ENCODE measurements at regions of chr11 and their contacts with region 1.

Region 1: DNA sequence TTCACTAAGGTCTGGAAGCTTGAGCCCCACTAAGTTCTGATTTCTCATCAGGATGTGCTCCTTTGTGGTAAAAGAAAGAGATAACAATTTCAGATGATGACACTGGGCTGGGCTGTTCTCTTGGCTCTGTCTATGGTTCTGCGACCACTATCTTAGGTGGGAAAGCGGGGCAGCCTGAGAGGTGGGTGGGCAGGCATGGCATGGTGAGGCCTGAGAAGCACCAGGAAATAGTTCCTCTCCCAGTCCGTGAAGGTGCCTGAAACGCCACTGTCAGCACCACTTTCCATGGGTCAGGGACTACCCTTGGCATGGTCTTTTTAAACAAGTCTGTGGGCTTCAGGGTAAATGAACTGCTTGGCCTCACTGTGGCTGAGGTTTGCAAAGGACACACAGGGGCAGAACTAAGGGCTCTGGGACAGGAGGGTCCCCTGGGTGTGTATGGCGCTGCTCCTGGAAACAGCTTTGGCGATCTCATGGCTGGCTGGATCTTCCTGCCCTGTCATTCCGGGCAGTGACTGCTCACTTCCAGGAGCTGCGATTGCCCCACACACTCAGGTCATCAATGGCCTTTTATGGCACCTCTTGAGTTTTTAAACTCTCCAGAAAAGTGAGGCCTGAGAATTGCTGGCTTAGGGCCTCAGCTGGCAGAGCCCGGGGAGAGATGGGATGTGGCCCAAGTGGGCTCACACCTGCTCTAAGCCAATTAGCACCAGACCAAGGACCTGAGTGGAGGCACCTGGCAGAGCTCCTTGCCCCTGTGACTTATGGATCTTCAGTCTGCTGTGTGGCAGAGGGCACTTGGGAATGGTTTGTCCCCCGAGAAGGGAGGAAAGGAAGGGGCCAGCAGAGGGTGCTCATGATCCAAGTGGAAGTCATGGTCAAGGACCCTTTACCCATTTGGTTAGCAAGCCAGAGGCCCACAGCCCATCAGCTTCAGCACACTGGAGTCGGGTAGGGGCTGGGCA is 55.6 kb upstream of the LYVE1 start:
- DNase-seq: peak in 1 of 3 donors; percentile 46
- H3K4me3 ChIP-seq: peak overlapping the region in 1 of 3 experiments; percentile 39
- H3K4me3 Mint-ChIP-seq: peak overlapping the region in 1 of 2 donors; percentile 78
- H3K27ac ChIP-seq: peak overlapping the region; percentile 73 to 92
- H3K27ac Mint-ChIP-seq: peak overlapping the region; percentile 95 to 100 (median 97)
- H3K4me1 ChIP-seq: peaks cover 45 to 46% of the 10 kb centered on the region in 2 donors
- H3K4me1 Mint-ChIP-seq: peaks cover 34% of the 10 kb centered on the region
- H3K27me3 ChIP-seq: no peaks in the 10 kb centered on the region
- H3K27me3 Mint-ChIP-seq: peaks cover 0 to 1% (median 0%) of the 10 kb centered on the region in 3 donors
- CTCF ChIP-seq: peak; percentile 15

Region 2: GRCh38 chr11:10550503-10551289 is 73.4 kb before region 1 on chr11:
- intact Hi-C with region 1: no loop called
- DNase-seq: no peak
- H3K4me3 ChIP-seq: no peak overlapping the region
- H3K4me3 Mint-ChIP-seq: no peak overlapping the region
- H3K27ac ChIP-seq: no peak overlapping the region
- H3K27ac Mint-ChIP-seq: no peak overlapping the region
- H3K4me1 ChIP-seq: no peaks in the 10 kb centered on the region
- H3K4me1 Mint-ChIP-seq: peaks cover 3% of the 10 kb centered on the region
- H3K27me3 ChIP-seq: no peaks in the 10 kb centered on the region
- H3K27me3 Mint-ChIP-seq: peaks cover 0 to 2% (median 2%) of the 10 kb centered on the region in 3 donors
- CTCF ChIP-seq: no peak

Region 3: DNA sequence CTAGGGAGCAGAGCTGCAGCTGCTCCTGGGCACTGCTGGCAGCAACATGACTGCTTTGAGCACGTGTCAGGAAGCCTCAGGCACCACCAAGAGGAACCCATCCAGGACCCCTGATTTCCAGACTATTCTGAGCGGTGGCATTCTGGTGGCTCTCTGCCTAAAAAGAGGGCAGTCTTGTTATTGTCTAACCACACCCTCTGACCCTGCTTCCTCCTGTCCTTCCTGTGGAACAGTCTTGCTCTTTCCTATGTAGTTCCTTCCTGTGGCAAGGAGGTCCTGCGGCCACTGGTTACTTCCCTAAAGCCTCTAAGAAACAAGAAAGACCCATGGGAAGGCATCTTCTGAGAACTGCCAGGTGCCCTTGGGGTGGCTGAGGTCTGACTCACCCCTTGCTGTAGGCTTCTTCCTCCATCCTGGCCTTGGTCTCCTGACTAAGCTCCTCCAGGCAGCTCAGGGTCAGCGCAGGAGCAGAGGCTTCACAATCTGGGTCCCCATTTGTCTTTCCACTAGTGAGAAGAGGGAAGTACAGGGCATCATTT is 42.5 kb before region 1 on chr11:
- intact Hi-C with region 1: loop called (anchors 5 kb)
- DNase-seq: peak; percentile 94 to 99 (median 97)
- H3K4me3 ChIP-seq: peak overlapping the region in 1 of 3 experiments; percentile 59
- H3K4me3 Mint-ChIP-seq: peak overlapping the region; percentile 35 to 46
- H3K27ac ChIP-seq: peak overlapping the region; percentile 60 to 81
- H3K27ac Mint-ChIP-seq: peak overlapping the region; percentile 76 to 97 (median 92)
- H3K4me1 ChIP-seq: peaks cover 59 to 60% of the 10 kb centered on the region in 2 donors
- H3K4me1 Mint-ChIP-seq: peaks cover 59% of the 10 kb centered on the region
- H3K27me3 ChIP-seq: no peaks in the 10 kb centered on the region
- H3K27me3 Mint-ChIP-seq: peaks cover 2 to 3% (median 2%) of the 10 kb centered on the region in 3 donors
- CTCF ChIP-seq: no peak

Region 4: DNA sequence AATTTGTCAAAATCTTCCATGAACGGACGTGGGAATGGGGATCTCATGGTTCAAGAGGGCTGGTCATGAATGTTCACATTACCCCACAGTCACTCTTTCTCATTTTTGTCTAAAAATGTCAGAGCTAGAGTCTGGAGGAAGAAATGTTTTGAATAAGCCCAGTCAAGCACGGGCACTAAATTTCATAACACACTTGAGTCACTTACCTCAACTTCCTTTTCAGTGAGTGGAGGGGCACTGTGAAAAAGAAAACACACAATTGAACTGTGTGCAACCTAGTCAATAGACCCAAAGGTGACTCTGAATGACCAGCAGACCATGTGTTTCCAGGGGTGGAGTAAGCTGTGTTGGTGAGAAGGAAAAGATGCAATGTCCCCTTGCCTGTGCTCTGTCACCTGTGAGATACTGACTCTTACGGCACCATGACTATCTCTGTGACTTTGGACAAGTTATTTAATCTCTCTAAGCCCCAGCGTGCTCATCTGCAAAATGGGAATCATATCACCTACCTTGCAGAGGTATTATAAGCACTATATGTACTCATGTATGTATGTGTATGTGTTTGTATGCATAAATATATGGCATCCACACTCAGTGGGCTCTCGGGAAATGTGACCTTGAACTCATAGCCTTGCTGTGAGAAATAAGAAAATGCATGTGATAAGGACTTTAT is 17.4 kb before region 1 on chr11:
- intact Hi-C with region 1: loop called in 1 of 2 experiments (anchors 2 kb)
- DNase-seq: peak; percentile 84 to 94 (median 90)
- H3K4me3 ChIP-seq: peak overlapping the region; percentile 39 to 76 (median 71)
- H3K4me3 Mint-ChIP-seq: peak overlapping the region; percentile 72 to 88
- H3K27ac ChIP-seq: peak overlapping the region; percentile 79 to 95
- H3K27ac Mint-ChIP-seq: peak overlapping the region; percentile 94 to 99 (median 97)
- H3K4me1 ChIP-seq: peaks cover 100% of the 10 kb centered on the region in 2 donors
- H3K4me1 Mint-ChIP-seq: peaks cover 99% of the 10 kb centered on the region
- H3K27me3 ChIP-seq: no peaks in the 10 kb centered on the region
- H3K27me3 Mint-ChIP-seq: peaks cover 0 to under 1% (median 0%) of the 10 kb centered on the region in 3 donors
- CTCF ChIP-seq: no peak